ENCODE measurements at regions of chr3 and their contacts with region 1.

Region 1: DNA sequence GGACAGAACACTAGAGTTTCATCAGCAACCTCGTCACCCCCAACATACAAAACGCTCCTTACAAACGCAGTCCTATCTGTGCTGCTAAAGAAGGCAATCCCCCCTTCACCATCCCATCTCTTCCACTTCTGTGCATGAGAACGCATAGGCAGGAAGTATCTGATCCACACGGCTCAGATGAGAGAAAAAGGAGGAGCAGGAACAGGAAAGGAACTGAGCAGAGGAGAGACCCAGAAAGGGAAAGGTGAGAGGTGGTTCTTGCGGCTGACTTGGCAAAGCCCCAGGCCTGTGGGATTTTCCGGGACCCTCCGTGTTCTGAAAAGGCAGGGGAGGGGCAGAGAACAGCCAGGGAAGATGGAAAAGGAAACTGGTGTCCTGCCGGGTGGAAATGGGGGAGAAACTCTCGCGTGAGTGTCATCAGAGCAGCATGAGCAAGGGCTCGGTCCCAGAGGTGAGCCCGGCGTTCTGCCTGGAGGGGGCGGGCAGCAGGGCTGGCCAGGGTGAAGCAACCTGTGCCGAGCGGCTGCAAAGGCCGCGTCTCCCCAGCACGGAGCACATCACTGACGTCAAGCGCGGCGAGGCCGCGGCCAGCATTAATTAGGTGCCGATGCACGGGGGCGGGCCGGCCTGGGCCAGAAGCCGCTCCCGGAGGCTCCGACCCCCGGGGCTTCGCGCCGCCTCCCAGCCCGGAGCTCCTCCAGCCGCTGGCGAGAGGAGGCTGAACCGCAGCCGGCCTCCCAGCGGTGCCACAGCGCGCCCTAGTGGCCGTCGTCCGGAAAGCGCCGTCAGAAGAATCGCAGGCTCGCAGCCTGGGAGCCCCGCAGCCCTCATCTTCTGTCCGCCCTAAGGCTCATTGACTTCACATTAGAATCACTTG is 35.8 kb downstream of the CPN2 start:
- DNase-seq: peak; percentile 91 to 97
- H3K4me3 ChIP-seq: peak overlapping the region; percentile 51
- H3K27ac ChIP-seq: peak overlapping the region; percentile 75
- H3K4me1 ChIP-seq: peaks cover 27% of the 10 kb centered on the region
- H3K27me3 ChIP-seq: no peaks in the 10 kb centered on the region
- CTCF ChIP-seq: peak; percentile 99

Region 2: GRCh38 chr3:193465992-193466608 is 849.2 kb before region 1 on chr3:
- CTCF ChIA-PET with region 1: no interaction called
- POLR2A ChIA-PET with region 1: no interaction called
- intact Hi-C with region 1: loop called (anchors 10 kb)
- DNase-seq: no peak
- H3K4me3 ChIP-seq: no peak overlapping the region
- H3K27ac ChIP-seq: no peak overlapping the region
- H3K4me1 ChIP-seq: no peaks in the 10 kb centered on the region
- H3K27me3 ChIP-seq: peaks cover 18% of the 10 kb centered on the region; the same call in 1 of the 2 replicates
- CTCF ChIP-seq: no peak

Region 3: GRCh38 chr3:193851941-193852674 is 463.2 kb before region 1 on chr3:
- CTCF ChIA-PET with region 1: no interaction called
- POLR2A ChIA-PET with region 1: no interaction called
- intact Hi-C with region 1: loop called (anchors 2 kb)
- DNase-seq: peak; percentile 82 to 98
- H3K4me3 ChIP-seq: peak overlapping the region; percentile 49
- H3K27ac ChIP-seq: peak overlapping the region; percentile 98
- H3K4me1 ChIP-seq: peaks cover 70% of the 10 kb centered on the region
- H3K27me3 ChIP-seq: no peaks in the 10 kb centered on the region
- CTCF ChIP-seq: no peak

Region 4: GRCh38 chr3:194158922-194159439 is 156.3 kb before region 1 on chr3:
- CTCF ChIA-PET with region 1: interaction called, 16 read pairs
- POLR2A ChIA-PET with region 1: no interaction called
- intact Hi-C with region 1: no loop called
- DNase-seq: peak; percentile 86 to 98
- H3K4me3 ChIP-seq: no peak overlapping the region; the same call in 1 of the 2 replicates
- H3K27ac ChIP-seq: peak overlapping the region; percentile 86
- H3K4me1 ChIP-seq: peaks cover 57% of the 10 kb centered on the region
- H3K27me3 ChIP-seq: no peaks in the 10 kb centered on the region
- CTCF ChIP-seq: no peak

Region 5: DNA sequence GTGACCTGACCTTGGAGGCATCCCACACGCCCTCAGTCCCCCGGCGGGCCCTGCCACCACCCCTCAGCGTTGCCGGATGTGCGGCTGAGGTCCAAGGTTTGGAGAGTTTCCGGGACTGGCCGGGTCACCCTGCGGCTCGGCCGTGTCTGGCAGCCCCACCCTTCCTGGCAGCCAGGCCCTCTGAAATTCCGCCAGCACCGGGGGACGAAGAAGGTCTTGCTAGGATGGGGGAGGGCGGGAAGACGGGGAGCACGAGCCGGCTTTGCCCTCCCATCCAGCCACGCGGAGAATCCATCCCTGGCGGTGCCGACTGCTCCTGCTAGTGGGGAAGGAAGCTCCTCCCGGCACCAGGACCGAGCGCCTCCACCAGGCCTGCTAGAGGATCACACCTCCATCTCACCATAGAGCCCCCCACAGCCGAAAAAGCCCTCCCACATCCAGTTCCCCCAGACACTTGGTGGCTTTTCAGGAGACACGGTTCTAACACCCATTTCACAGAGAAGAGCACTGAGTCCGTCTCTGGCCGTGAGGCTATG is 45.6 kb before region 1 on chr3:
- CTCF ChIA-PET with region 1: interaction called, 14 read pairs
- POLR2A ChIA-PET with region 1: no interaction called
- intact Hi-C with region 1: loop called (anchors 2 kb)
- DNase-seq: peak; percentile 82 to 88
- H3K4me3 ChIP-seq: peak overlapping the region; percentile 38; the same call in 1 of the 2 replicates
- H3K27ac ChIP-seq: peak overlapping the region; percentile 91
- H3K4me1 ChIP-seq: peaks cover 72% of the 10 kb centered on the region
- H3K27me3 ChIP-seq: no peaks in the 10 kb centered on the region
- CTCF ChIP-seq: peak; percentile 76

Region 6: GRCh38 chr3:194871143-194871863 is 556.0 kb after region 1 on chr3:
- CTCF ChIA-PET with region 1: no interaction called
- POLR2A ChIA-PET with region 1: no interaction called
- intact Hi-C with region 1: no loop called
- DNase-seq: peak; percentile 83 to 94
- H3K4me3 ChIP-seq: peak overlapping the region; percentile 14; the same call in 1 of the 2 replicates
- H3K27ac ChIP-seq: peak overlapping the region; percentile 91
- H3K4me1 ChIP-seq: peaks cover 50% of the 10 kb centered on the region
- H3K27me3 ChIP-seq: no peaks in the 10 kb centered on the region
- CTCF ChIP-seq: peak; percentile 20; the same call in 1 of the 2 replicates

Measured in PC-9 (cell line).